Activated CD8-positive, alpha-beta T cell treated with anti-CD3 and anti-CD28 coated beads for 36 hours (primary cell): ENCODE measurements at regions of chr10 and their contacts with region 1.

Region 1: GRCh38 chr10:128211953-128212727 is 85.9 kb upstream of the MKI67 start:
- DNase-seq: peak; percentile 88
- ATAC-seq: peak; percentile 91
- H3K4me3 Mint-ChIP-seq: peak overlapping the region; percentile 62
- H3K27ac Mint-ChIP-seq: no peak overlapping the region
- H3K4me1 Mint-ChIP-seq: peaks cover 13% of the 10 kb centered on the region
- H3K27me3 Mint-ChIP-seq: no peaks in the 10 kb centered on the region
- CTCF ChIP-seq: peak; percentile 92

Region 2: DNA sequence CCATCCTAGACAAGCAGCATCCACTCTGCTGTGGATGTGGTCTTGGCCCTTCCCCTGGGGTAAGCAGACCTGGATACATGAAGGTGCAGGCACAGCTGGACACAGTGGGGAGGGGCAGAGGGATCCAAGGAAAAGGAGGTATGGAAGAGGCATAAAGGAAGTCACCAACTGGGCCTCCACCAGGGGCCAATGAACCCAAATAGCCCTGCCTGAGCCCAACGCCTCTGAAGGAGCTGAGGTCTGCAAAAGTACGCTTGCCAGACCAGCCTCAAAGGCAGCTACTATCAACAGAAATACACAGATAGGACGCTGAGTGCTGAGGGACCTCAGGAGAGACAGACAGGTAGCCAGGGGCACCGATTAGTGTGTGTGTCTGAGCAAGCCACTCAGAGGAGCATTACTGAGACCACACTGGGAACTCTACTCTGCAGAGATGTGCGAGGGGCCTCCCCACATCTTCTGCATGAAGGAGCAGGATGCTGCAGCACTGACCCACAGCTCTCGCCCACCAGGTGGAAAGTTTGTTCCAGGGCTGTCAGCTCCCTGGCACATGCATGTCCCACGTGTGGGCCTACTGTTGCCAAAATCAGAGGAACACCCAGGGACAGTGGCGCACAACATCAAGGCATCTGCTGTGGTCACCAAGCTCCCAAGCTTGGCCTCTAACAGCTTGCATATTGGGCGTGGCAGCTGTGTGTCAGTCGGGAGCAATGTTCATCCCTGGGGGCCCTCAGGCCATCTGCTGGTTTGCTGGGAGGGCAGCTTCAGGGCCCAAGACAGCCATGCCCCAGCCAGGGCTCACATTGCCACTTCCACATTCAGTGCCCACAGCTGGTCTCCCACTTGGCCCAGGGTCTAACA is 125.9 kb before region 1 on chr10:
- CTCF ChIA-PET with region 1: no interaction called
- POLR2A ChIA-PET with region 1: no interaction called
- intact Hi-C with region 1: no loop called
- DNase-seq: no peak
- ATAC-seq: no peak
- H3K4me3 Mint-ChIP-seq: no peak overlapping the region
- H3K27ac Mint-ChIP-seq: no peak overlapping the region
- H3K4me1 Mint-ChIP-seq: peaks cover 4% of the 10 kb centered on the region
- H3K27me3 Mint-ChIP-seq: no peaks in the 10 kb centered on the region
- CTCF ChIP-seq: no peak

Region 3: DNA sequence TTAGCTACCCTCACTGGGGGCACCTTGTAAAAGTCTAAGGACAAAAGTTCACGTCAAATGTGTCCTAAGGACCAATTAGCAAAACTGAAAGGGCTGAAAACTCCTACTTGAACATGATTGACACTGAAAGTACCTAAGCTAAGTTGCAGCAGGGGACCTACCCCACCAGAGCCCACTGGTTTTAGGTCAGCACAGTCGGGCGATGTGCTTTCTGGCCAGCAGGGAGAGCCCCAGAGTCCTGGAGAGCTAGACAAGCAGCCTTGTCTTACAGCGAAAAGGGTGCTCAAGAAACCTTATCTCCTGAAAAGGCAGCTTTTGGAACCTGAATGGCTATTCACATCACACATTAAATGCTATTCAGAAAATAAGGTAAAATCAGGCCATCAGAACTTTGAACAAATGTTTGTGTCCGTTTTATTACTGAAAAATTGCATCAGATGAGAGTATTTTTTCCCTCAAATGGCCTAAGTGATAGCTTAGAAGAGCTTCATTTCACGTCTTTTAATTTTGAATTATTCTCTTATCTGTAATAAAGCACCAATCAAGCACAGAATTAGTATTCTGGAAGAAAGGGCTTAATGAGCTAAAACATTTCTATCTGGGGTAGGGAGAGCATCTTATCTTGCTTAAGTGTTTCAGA is 33.7 kb before region 1 on chr10:
- CTCF ChIA-PET with region 1: interaction called, 65 read pairs
- POLR2A ChIA-PET with region 1: no interaction called
- intact Hi-C with region 1: no loop called
- DNase-seq: peak; percentile 76
- ATAC-seq: peak; percentile 84
- H3K4me3 Mint-ChIP-seq: no peak overlapping the region
- H3K27ac Mint-ChIP-seq: no peak overlapping the region
- H3K4me1 Mint-ChIP-seq: peaks cover 25% of the 10 kb centered on the region
- H3K27me3 Mint-ChIP-seq: no peaks in the 10 kb centered on the region
- CTCF ChIP-seq: peak; percentile 69

Region 4: DNA sequence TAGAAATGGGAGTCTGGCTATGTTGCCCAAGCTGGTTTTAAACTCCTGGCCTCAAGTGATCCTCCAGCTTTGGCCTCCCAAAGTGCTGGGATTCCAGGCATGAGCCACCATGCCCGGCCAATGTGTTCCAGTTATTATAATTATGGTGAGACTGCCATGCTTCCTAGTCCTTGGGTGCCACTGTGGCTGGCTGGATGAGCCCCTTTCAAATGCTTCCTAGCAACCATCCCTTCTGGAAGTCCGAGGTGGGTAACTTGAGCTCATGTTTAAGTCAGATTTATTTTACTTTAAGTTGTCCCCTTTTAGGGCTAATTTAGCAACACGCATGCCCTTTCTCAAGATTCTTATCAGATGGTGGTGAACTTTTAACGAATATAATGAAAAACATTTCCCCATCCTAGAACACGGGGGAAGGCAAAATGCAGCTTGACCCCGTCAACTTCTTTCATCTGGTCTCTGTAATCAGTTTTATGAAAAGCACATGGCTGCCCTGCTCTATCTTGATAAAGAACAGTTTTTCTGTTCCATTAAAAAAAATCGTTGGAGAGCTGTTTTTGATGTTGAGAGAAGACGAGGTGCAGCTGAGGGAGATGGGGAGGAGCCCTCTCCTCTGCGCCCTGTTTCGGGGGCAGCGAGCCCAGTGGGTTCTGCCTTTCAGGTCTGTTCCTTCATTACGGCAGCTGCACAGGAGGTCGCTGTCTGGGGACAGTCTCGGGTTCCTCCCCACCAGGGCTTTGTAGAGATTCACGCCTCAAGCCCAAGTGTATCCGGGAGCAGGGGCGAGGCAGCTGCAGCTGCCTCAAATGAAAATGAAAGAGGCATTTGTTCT is 25.0 kb before region 1 on chr10:
- CTCF ChIA-PET with region 1: interaction called, 38 read pairs
- POLR2A ChIA-PET with region 1: interaction called, 5 read pairs
- intact Hi-C with region 1: no loop called
- DNase-seq: peak; percentile 54
- ATAC-seq: peak; percentile 87
- H3K4me3 Mint-ChIP-seq: peak overlapping the region; percentile 72
- H3K27ac Mint-ChIP-seq: peak overlapping the region; percentile 85
- H3K4me1 Mint-ChIP-seq: peaks cover 21% of the 10 kb centered on the region
- H3K27me3 Mint-ChIP-seq: no peaks in the 10 kb centered on the region
- CTCF ChIP-seq: no peak

Region 5: DNA sequence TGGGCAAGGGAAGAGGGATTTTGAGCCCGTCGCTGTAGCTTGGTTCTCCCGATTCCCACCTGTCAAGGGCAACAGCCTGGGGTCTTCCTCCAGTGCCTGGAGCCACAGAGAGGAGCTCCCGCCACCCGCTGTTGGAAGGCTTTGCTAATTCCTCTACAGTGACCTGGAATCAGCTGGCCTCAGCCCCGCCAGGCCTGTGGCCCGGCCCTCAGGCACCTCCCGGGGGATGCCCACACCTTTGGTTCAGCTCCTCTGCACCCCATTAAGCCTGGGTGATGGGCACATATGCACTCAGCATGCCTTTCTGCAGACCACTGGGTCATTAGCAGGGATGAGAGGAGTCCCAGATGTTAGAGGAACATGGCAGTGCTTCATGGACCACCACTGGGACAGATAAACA is 35.4 kb after region 1 on chr10:
- CTCF ChIA-PET with region 1: no interaction called
- POLR2A ChIA-PET with region 1: no interaction called
- intact Hi-C with region 1: no loop called
- DNase-seq: no peak
- ATAC-seq: no peak
- H3K4me3 Mint-ChIP-seq: no peak overlapping the region
- H3K27ac Mint-ChIP-seq: no peak overlapping the region
- H3K4me1 Mint-ChIP-seq: no peaks in the 10 kb centered on the region
- H3K27me3 Mint-ChIP-seq: no peaks in the 10 kb centered on the region
- CTCF ChIP-seq: no peak